Activated naive CD4-positive, alpha-beta T cell treated with anti-CD3 and anti-CD28 coated beads for 36 hours (primary cell): ENCODE measurements at regions of chr9 and their contacts with region 1.

Region 1: GRCh38 chr9:28320616-28321015 is 747.3 kb upstream of the C9orf72 start:
- DNase-seq: no peak
- H3K4me3 Mint-ChIP-seq: no peak overlapping the region
- H3K27ac Mint-ChIP-seq: no peak overlapping the region
- H3K4me1 Mint-ChIP-seq: no peaks in the 10 kb centered on the region
- H3K27me3 Mint-ChIP-seq: no peaks in the 10 kb centered on the region

Region 2: DNA sequence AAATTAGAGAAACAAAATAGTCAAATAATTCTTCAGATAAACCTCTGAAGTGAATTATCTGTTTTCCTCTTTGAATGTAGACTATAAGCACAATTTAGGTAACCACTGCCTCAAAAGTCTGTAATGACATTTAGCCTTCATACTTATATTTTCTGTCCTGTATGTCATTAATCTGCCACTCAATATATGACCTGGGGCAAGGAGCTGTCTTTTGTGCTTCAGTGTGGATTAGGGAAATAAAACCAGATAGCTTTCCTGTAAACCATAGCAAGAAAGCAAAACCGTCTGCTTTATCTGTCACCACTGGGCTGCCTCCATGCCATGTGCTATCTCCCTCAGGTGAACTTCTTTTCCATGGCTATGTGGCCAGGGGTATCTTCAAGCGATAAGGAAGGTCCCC is 140.7 kb before region 1 on chr9:
- CTCF ChIA-PET with region 1: no interaction called
- intact Hi-C with region 1: no loop called
- DNase-seq: no peak
- H3K4me3 Mint-ChIP-seq: no peak overlapping the region
- H3K27ac Mint-ChIP-seq: no peak overlapping the region
- H3K4me1 Mint-ChIP-seq: no peaks in the 10 kb centered on the region
- H3K27me3 Mint-ChIP-seq: no peaks in the 10 kb centered on the region

Region 3: DNA sequence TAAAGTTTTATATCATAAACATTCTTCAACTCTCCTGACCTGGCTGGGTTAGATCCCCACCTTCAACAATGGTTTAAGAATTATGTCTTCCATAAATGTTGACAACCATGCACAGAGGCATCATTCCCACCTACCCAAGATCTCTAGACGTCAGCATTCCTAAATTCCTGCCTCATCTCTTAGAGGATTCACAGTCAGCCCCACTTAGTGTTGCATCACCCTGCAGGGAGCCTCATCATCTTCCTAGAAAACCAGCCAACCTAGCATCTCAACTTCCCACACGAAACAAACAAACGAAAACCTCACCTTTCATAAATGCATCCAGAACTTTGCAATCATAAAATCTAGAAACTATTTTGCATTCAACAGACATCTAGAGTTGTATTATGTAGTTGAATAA is 68.8 kb after region 1 on chr9:
- CTCF ChIA-PET with region 1: no interaction called
- intact Hi-C with region 1: loop called (anchors 10 kb)
- DNase-seq: no peak
- H3K4me3 Mint-ChIP-seq: no peak overlapping the region
- H3K27ac Mint-ChIP-seq: no peak overlapping the region
- H3K4me1 Mint-ChIP-seq: no peaks in the 10 kb centered on the region
- H3K27me3 Mint-ChIP-seq: no peaks in the 10 kb centered on the region

Region 4: DNA sequence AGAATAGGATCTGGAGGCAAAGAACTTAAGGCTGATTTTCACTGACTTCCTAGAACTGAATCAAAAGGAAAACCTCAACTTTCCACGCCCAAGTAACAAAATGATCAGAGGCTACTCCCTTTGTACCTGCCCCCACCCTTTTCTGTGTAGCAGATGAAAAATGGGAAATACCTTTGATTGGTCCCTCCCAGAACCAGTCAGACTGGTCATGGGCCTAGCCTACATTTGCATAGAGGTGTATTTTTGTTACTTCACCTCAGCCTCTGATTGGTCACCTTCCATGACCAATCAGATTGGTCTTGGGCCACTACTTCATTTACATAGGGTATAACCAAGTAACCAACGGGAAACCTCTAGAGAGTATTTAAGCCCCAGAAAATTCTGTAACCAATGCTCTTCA is 806.2 kb after region 1 on chr9:
- CTCF ChIA-PET with region 1: no interaction called
- intact Hi-C with region 1: no loop called
- DNase-seq: no peak
- H3K4me3 Mint-ChIP-seq: no peak overlapping the region
- H3K27ac Mint-ChIP-seq: no peak overlapping the region
- H3K4me1 Mint-ChIP-seq: no peaks in the 10 kb centered on the region
- H3K27me3 Mint-ChIP-seq: no peaks in the 10 kb centered on the region

Region 5: DNA sequence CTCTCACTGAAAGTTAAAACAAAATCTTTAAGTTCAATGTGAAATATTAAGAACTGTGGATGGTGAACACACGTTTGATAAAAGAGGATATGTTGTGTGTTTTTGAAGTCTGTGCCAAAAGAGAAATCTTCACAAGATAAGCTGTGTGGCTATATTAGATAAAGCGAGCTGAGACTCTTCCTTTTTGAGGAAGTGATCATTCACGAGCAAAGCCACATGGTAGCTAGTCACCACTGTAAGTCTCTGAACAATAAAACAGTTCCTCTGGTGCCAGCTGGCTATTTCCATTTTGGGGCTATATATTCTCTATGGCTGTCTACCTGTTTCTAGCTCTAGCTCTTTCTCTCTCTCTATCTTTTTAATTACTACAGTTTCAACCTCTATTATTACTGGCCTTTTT is 1101.8 kb after region 1 on chr9:
- CTCF ChIA-PET with region 1: no interaction called
- intact Hi-C with region 1: no loop called
- DNase-seq: no peak
- H3K4me3 Mint-ChIP-seq: no peak overlapping the region
- H3K27ac Mint-ChIP-seq: no peak overlapping the region
- H3K4me1 Mint-ChIP-seq: no peaks in the 10 kb centered on the region
- H3K27me3 Mint-ChIP-seq: no peaks in the 10 kb centered on the region